ENCODE measurements at regions of chr9 and their contacts with region 1.

Region 1: DNA sequence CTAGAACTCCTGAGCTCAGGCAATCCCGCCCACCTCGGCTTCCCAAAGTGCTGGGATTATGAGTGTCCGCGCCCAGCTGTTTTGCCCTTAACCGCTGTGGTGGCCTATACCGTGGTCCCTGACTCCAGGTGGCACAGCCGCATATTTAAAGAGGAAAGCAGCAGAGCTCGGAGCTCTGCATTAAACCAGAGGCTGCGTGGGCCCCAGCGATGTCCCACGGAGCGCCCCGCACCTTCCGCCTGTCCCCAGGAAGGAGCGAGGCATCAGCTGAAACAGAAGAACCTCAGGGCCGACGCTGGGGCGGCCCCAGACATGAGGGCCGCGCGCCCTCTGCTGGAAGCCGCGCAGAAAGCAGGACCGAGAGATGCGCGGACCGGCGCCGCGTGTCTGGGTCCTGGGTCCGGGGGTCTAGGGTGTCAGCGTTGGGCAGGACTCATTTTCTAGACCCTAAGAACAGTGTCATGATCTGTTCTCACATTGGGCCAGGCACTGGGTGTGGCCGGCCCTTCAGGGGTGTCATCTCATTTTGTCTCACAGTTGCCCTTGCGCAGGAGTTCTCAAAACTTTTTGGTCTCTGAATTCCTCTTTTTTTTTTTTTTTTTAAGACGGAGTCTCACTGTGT is 37.7 kb downstream of the LAMC3 start:
- DNase-seq: peak in 1 of 2 donors; percentile 75
- H3K4me3 ChIP-seq: peak overlapping the region; percentile 3 to 43
- H3K27ac ChIP-seq: no peak overlapping the region
- H3K4me1 ChIP-seq: no peaks in the 10 kb centered on the region
- H3K27me3 ChIP-seq: no peaks in the 10 kb centered on the region
- CTCF ChIP-seq: peak; percentile 93 to 98 (median 96)

Region 2: DNA sequence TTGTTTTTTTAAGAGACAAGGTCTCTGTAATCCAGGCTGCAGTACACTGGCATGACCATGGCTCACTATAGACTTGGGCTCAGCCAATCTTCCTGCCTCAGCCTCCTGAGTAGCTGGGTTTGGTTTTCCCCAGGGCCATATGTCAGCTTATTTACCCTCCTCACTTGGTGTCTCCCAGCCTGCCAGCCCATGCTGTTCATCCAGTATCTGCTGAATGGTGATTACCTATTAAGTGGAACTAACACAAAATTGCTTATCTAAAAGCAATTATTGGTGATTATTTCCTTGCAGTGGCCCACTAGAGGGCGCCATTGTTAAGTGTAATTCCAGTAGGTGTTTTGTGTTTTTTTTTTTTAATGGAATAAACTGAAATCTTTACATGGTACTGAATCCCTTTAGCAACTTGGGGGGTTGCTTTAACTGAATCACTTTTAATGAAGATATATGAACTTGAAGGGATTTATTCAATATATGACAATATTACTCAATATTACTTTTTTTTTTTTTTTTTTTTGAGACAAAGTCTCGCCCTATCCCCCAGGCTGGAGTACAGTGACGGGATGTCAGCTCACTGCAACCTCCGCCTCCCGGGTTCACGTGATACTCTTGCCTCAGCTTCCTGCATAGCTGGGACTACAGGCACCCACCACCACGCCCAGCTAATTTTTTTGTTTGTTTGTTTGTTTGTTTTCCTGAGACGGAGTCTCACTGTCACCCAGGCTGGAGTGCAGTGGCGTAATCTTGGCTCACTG is 339.3 kb before region 1 on chr9:
- intact Hi-C with region 1: loop called (anchors 5 kb)
- DNase-seq: peak in 1 of 2 donors; percentile 81
- H3K4me3 ChIP-seq: no peak overlapping the region
- H3K27ac ChIP-seq: no peak overlapping the region
- H3K4me1 ChIP-seq: peaks cover 0 to 2% of the 10 kb centered on the region in 2 donors
- H3K27me3 ChIP-seq: no peaks in the 10 kb centered on the region
- CTCF ChIP-seq: peak; percentile 35 to 78 (median 65)

Region 3: GRCh38 chr9:130866474-130866965 is 180.2 kb before region 1 on chr9:
- intact Hi-C with region 1: loop called (anchors 5 kb)
- DNase-seq: peak in 1 of 2 donors; percentile 78
- H3K4me3 ChIP-seq: no peak overlapping the region
- H3K27ac ChIP-seq: no peak overlapping the region
- H3K4me1 ChIP-seq: peaks cover 0 to 29% of the 10 kb centered on the region in 2 donors
- H3K27me3 ChIP-seq: no peaks in the 10 kb centered on the region
- CTCF ChIP-seq: peak; percentile 52 to 75 (median 74)

Region 4: DNA sequence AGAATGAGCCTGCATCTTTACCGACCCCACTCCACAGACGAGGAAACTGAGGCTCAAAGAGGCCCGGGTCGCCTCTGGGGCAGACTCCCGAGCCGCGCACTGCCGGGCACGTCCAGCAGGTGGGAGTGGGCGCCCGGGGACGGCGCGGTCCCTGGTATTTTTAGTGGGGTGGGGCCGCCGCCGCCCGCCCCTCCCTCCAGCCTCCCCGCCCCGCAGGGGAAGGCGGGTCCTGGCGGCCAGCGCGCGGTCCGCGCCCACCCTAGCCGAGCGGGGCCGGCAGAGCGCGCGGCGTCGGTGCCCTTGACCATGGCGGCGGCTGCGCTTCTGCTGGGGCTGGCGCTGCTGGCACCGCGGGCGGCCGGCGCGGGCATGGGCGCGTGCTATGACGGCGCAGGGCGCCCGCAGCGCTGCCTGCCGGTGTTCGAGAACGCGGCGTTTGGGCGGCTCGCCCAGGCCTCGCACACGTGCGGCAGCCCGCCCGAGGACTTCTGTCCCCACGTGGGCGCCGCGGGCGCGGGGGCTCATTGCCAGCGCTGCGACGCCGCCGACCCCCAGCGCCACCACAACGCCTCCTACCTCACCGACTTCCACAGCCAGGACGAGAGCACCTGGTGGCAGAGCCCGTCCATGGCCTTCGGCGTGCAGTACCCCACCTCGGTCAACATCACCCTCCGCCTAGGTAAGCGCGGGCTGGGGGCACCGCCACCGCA is 37.6 kb before region 1 on chr9 and contains the start of gene LAMC3:
- intact Hi-C with region 1: loop called (anchors 5 kb)
- DNase-seq: no peak
- H3K4me3 ChIP-seq: peak within 1 kb of the TSS; percentile 47 to 52
- H3K27ac ChIP-seq: no peak within 1 kb of the TSS
- H3K4me1 ChIP-seq: no peaks in the 10 kb centered on the region
- H3K27me3 ChIP-seq: no peaks in the 10 kb centered on the region
- CTCF ChIP-seq: peak; percentile 29 to 65 (median 49)
- total RNA-seq, gene LAMC3: 1.6 TPM

Measured in ascending aorta (tissue), 2 donors.